ENCODE measurements at regions of chr2 and their contacts with region 1.

Region 1: GRCh38 chr2:232286001-232286868 is 92.3 kb upstream of the ALPP start:
- DNase-seq: no peak

Region 2: GRCh38 chr2:232018181-232018580 is 268.1 kb before region 1 on chr2:
- intact Hi-C with region 1: no loop called
- DNase-seq: no peak

Region 3: DNA sequence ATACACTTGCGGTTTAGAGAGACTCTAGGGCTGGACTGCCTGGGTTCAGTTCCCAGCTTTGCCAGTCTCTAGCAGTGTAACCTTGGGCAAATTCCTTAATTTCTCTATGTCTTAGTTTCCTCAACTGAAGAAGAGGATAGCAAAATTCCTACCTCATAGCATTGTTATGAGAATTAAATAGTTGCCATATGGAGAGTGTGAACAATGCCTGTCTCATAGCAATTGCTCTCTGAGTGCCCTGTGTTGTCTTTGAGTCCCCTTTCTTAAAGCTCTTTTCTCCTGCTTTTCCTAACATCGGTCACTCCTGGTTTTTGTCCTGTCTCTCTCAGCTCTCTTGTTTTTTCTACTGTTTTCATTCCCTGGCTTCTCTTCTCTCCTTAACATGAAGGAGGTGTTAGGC is 24.5 kb before region 1 on chr2:
- intact Hi-C with region 1: no loop called
- DNase-seq: no peak

Region 4: DNA sequence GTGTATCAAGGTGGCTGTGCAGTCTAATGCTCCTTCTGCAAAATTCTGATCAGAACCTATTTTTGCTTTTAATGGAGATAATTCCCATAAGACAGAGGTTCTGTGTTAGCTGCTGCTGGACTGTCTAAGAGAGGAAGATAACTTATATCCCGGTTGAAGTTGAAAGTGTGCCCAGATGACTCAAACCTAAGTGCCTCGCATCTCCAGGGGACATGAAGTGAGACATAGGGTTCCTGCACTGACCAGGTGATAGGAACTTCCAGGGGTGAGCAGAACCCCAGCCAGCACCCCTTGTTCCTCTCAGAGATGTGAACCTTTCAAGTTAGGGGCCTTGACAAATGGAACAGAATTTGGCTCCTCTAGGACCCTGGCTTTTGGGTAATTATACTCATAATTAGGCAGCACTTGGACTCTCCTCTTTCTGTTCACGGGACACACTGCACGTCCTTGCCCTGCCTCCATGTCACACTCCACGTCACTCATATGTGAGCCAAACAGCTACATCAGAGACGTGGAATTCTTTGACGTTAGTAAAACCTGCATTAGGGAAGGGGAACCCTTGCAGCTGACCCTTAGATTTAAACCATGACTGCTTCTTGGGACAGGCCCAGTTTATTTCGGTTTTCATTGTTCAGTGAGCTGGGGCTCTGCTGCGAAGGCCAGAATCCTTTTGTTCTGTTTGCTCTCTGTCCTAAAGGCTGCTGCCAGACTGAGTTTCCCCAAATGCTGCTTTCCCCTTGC is 12.2 kb before region 1 on chr2:
- intact Hi-C with region 1: loop called in 1 of 2 experiments (anchors 1 kb)
- DNase-seq: no peak

Region 5: GRCh38 chr2:232487385-232488096 is 201.3 kb after region 1 on chr2 and contains the start of gene ECEL1:
- intact Hi-C with region 1: no loop called
- DNase-seq: peak; percentile 75
- total RNA-seq, gene ECEL1: 0.52 to 2.8 TPM

Measured in posterior vena cava (tissue), 2 donors.